A549 (cell line): ENCODE measurements at regions of chr17 and their contacts with region 1.

Region 1: DNA sequence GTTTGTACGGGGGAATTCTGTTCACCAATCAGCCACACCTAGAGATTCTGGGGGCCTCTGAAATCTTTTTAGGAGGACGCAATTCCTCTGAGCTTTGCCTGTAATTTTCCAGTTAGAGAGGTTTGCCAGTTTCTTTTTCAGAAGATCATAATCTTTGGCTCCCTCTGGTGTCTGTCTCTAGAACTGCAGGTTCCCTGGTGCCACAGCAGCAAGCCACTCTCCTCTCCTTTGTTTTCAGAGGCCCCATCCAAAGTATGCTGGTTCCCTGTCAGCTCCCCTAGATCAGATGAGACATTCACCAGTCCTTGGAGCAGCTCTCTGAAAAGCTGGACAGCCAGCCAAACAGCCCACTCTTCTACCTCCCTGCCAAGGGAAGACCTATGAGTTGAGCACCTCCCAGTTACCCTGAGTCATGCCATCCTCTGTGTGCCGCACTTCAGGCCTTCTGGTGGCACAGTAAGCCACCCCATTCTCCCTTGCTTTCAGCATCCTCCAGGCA is 36.1 kb downstream of the RNF112 start:
- DNase-seq: peak; percentile 75 to 80
- ATAC-seq: peak; percentile 74 to 82
- H3K4me3 ChIP-seq: no peak overlapping the region
- H3K27ac ChIP-seq: peak overlapping the region; percentile 56 to 82
- H3K4me1 ChIP-seq: peaks cover 29% of the 10 kb centered on the region
- CTCF ChIP-seq: peak; percentile 97
- EP300 ChIP-seq: no peak
- POLR2A ChIP-seq: no peak
- RAD21 ChIP-seq: peak; percentile 95 to 96

Region 2: GRCh38 chr17:19377602-19378392 is 69.3 kb before region 1 on chr17:
- CTCF ChIA-PET with region 1: interaction called, 59 read pairs
- POLR2A ChIA-PET with region 1: interaction called, 26 read pairs
- DNase-seq: peak; percentile 100
- ATAC-seq: peak; percentile 86 to 90
- H3K4me3 ChIP-seq: peak overlapping the region; percentile 80
- H3K27ac ChIP-seq: peak overlapping the region; percentile 90 to 91
- H3K4me1 ChIP-seq: peaks cover 16% of the 10 kb centered on the region
- CTCF ChIP-seq: no peak
- EP300 ChIP-seq: no peak
- POLR2A ChIP-seq: peak; percentile 52; the same call in 1 of the 2 replicates
- RAD21 ChIP-seq: no peak

Region 3: GRCh38 chr17:19399750-19400450 is 47.2 kb before region 1 on chr17:
- CTCF ChIA-PET with region 1: interaction called, 24 read pairs
- POLR2A ChIA-PET with region 1: no interaction called
- DNase-seq: no peak
- ATAC-seq: no peak
- H3K4me3 ChIP-seq: no peak overlapping the region
- H3K27ac ChIP-seq: no peak overlapping the region
- H3K4me1 ChIP-seq: peaks cover 11% of the 10 kb centered on the region
- CTCF ChIP-seq: no peak
- EP300 ChIP-seq: no peak
- POLR2A ChIP-seq: no peak
- RAD21 ChIP-seq: no peak

Region 4: GRCh38 chr17:19418251-19418992 is 28.7 kb before region 1 on chr17:
- CTCF ChIA-PET with region 1: interaction called, 58 read pairs
- POLR2A ChIA-PET with region 1: no interaction called
- DNase-seq: peak in 1 of 2 experiments; percentile 28
- ATAC-seq: peak in 1 of 2 experiments; percentile 46; a peak in 2 of 6 replicates
- H3K4me3 ChIP-seq: no peak overlapping the region
- H3K27ac ChIP-seq: no peak overlapping the region
- H3K4me1 ChIP-seq: peaks cover 6% of the 10 kb centered on the region
- CTCF ChIP-seq: no peak
- EP300 ChIP-seq: no peak
- POLR2A ChIP-seq: no peak
- RAD21 ChIP-seq: no peak

Region 5: GRCh38 chr17:19433727-19434340 is 13.3 kb before region 1 on chr17:
- CTCF ChIA-PET with region 1: interaction called, 75 read pairs
- POLR2A ChIA-PET with region 1: no interaction called
- DNase-seq: no peak
- ATAC-seq: peak in 1 of 2 experiments; percentile 26; a peak in 1 of 6 replicates
- H3K4me3 ChIP-seq: no peak overlapping the region
- H3K27ac ChIP-seq: no peak overlapping the region
- H3K4me1 ChIP-seq: no peaks in the 10 kb centered on the region
- CTCF ChIP-seq: no peak
- EP300 ChIP-seq: no peak
- POLR2A ChIP-seq: no peak
- RAD21 ChIP-seq: 0 out of 5 replicates have a peak, but pooled peaks of 1 of the 2 experiments have one; percentile 11

Region 6: DNA sequence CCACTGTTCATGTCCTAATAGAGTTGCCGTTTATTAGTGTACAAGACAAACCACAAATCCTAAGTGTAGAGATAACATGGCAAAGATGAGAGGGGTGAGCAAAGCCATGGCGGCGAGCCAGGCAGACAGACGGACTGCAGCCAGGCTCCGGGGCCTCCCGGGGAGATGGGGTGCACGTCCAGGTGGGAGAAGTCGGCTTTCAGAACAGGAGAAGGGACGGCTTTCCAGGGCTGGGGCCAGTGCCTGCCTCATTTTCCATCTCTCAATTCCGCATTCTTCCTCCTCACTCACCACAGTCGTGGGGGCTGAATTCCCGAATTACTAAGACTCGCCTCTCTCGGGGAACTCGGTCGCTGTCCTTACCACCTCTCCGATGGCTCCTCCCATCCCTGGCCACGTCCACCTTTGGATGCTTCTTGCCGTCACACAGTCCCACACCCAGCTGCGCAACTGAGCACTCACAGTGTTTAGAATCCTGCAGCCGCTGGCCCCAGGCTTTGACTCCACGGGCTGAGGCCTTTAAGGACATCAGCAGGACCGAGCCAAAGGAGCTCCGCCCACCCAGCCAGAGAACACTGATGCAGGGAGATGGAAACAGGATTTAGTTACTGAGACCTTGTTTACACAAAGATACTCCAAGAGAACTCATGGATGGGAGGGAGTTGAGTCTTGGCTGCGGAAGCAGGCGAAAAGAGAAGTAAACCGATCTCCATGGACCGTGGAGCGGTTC is 23.6 kb after region 1 on chr17:
- CTCF ChIA-PET with region 1: interaction called, 17 read pairs
- POLR2A ChIA-PET with region 1: interaction called, 3 read pairs
- DNase-seq: no peak
- ATAC-seq: 0 out of 6 replicates have a peak, but pooled peaks of 1 of the 2 experiments have one; percentile 31
- H3K4me3 ChIP-seq: no peak overlapping the region
- H3K27ac ChIP-seq: no peak overlapping the region
- H3K4me1 ChIP-seq: no peaks in the 10 kb centered on the region
- CTCF ChIP-seq: no peak
- EP300 ChIP-seq: no peak
- POLR2A ChIP-seq: no peak
- RAD21 ChIP-seq: no peak

Region 7: GRCh38 chr17:19596869-19597268 is 149.7 kb after region 1 on chr17:
- CTCF ChIA-PET with region 1: no interaction called
- POLR2A ChIA-PET with region 1: no interaction called
- DNase-seq: no peak
- ATAC-seq: no peak
- H3K4me3 ChIP-seq: no peak overlapping the region
- H3K27ac ChIP-seq: no peak overlapping the region
- H3K4me1 ChIP-seq: no peaks in the 10 kb centered on the region
- CTCF ChIP-seq: no peak
- EP300 ChIP-seq: no peak
- POLR2A ChIP-seq: no peak
- RAD21 ChIP-seq: no peak

Region 8: GRCh38 chr17:19673623-19674022 is 226.5 kb after region 1 on chr17:
- CTCF ChIA-PET with region 1: no interaction called
- POLR2A ChIA-PET with region 1: no interaction called
- DNase-seq: no peak
- ATAC-seq: no peak
- H3K4me3 ChIP-seq: no peak overlapping the region
- H3K27ac ChIP-seq: no peak overlapping the region
- H3K4me1 ChIP-seq: peaks cover 20% of the 10 kb centered on the region
- CTCF ChIP-seq: no peak
- EP300 ChIP-seq: no peak
- POLR2A ChIP-seq: no peak
- RAD21 ChIP-seq: no peak